ENCODE measurements at regions of chr17 and their contacts with region 1.

Region 1: DNA sequence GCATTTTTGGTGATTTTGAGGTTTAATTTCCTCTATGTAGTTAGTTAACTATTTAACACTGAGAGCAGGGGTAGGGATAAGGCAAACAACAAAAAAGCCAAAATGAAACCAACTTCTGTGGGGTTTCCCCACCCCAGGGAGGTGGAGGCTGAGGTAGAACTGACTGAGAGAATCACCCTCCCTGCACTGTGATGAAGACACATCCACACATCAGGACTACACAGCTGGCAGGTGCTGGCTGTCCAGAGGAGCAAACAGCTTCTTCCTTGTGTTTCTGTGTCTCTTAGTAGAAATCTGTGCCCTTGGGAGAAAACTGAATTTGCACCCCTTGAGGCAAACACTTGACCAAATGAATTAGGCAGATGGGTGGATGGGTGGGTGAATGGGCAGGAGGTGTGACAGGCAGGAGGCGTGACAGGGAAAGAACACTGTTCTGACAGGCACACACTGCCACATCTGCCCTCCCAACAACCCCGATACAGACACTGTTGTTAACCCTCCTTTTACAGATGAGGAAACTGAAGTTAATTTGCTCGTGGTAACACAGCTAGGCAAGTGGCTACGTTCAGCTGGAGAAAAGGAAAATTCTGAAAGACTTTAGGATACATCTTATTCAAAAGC is 62.9 kb upstream of the AMZ2 start:
- DNase-seq: peak in 7 of 9 experiments; percentile 46 to 89 (median 64)
- ATAC-seq: peak; percentile 70
- H3K4me3 ChIP-seq: peak overlapping the region; percentile 11 to 74
- H3K4me3 Mint-ChIP-seq: peak overlapping the region; percentile 68
- H3K27ac ChIP-seq: peak overlapping the region; percentile 5 to 92
- H3K27ac Mint-ChIP-seq: peak overlapping the region; percentile 86
- H3K4me1 ChIP-seq: peaks cover 56% of the 10 kb centered on the region
- H3K4me1 Mint-ChIP-seq: peaks cover 63% of the 10 kb centered on the region
- H3K27me3 ChIP-seq: no peaks in the 10 kb centered on the region
- H3K27me3 Mint-ChIP-seq: no peaks in the 10 kb centered on the region
- CTCF ChIP-seq: no peak

Region 2: DNA sequence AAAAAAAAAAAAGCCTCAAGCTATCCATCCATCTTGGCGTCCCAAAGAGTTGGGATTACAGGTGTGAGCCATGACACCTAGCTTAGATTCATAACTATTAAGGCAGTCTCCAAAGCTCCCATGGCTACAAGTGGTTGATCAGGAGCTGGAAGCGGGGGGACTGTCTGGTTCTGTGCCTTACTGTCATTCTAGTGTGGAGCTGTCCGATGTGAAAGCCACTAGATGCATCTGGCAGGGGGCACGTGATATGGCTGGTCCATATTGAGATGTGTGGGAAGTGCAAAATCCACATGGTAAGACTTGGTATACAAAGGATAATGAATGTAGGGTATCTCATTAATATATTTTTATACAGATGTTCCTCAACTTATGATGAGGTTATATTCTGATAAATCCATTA is 110.6 kb before region 1 on chr17:
- CTCF ChIA-PET with region 1: no interaction called
- POLR2A ChIA-PET with region 1: no interaction called
- intact Hi-C with region 1: no loop called
- DNase-seq: no peak
- ATAC-seq: no peak
- H3K4me3 ChIP-seq: no peak overlapping the region
- H3K4me3 Mint-ChIP-seq: no peak overlapping the region
- H3K27ac ChIP-seq: no peak overlapping the region
- H3K27ac Mint-ChIP-seq: no peak overlapping the region
- H3K4me1 ChIP-seq: no peaks in the 10 kb centered on the region
- H3K4me1 Mint-ChIP-seq: no peaks in the 10 kb centered on the region
- H3K27me3 ChIP-seq: no peaks in the 10 kb centered on the region
- H3K27me3 Mint-ChIP-seq: no peaks in the 10 kb centered on the region
- CTCF ChIP-seq: no peak

Region 3: DNA sequence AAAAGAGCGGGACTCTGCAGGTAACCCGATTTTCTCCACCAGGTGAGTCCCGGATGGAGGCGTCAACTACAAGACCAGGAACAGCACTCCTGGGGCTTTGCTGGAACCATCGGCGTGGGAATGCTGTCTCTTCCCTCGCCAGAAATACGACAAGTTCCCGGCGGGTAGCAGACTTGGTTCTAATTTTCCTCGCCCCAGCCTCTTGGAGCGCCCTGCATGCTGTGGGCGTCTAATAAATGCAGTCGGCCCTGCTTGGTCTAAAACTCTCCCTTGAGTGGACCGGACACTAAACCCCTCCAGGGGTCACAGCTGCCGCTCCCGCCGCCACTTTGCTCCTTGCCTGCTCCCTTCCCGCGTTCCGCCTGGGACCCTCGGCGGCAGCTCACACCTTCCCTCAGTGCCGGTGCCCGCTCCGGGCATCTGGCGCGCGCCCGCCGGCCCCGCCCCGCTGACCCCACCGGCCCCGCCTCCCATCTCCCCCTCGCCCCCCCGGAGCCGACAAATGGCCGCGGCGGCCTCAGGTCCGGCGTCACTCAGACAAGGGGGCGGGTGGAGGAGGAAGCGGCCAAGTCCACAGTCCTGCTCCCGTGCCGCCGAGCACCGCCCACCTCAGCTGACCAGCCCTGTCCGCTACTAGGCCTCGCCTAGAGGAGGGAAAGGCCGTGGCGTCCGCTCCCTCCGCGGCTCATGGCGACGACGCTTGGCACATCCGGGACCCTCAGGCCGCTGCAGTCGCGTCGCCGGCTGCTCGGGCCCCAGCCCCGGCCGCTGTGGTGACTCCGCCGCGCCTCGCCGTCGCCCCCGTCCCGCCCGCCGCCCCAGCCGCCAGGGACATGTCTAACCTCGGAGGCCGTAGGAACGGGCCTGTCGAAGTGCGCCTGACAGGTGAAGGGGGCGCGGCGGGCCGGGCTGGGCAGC is 83.6 kb before region 1 on chr17:
- CTCF ChIA-PET with region 1: no interaction called
- POLR2A ChIA-PET with region 1: no interaction called
- intact Hi-C with region 1: loop called in 1 of 2 experiments (anchors 5 kb)
- DNase-seq: peak; percentile 38 to 83 (median 67)
- ATAC-seq: peak; percentile 70
- H3K4me3 ChIP-seq: peak overlapping the region; percentile 75 to 83
- H3K4me3 Mint-ChIP-seq: peak overlapping the region; percentile 96
- H3K27ac ChIP-seq: peak overlapping the region; percentile 73 to 88
- H3K27ac Mint-ChIP-seq: peak overlapping the region; percentile 97
- H3K4me1 ChIP-seq: peaks cover 12% of the 10 kb centered on the region
- H3K4me1 Mint-ChIP-seq: peaks cover 42% of the 10 kb centered on the region
- H3K27me3 ChIP-seq: no peaks in the 10 kb centered on the region
- H3K27me3 Mint-ChIP-seq: no peaks in the 10 kb centered on the region
- CTCF ChIP-seq: no peak

Region 4: GRCh38 chr17:68152161-68152571 is 32.8 kb before region 1 on chr17:
- CTCF ChIA-PET with region 1: no interaction called
- POLR2A ChIA-PET with region 1: no interaction called
- intact Hi-C with region 1: no loop called
- DNase-seq: no peak
- ATAC-seq: no peak
- H3K4me3 ChIP-seq: no peak overlapping the region
- H3K4me3 Mint-ChIP-seq: no peak overlapping the region
- H3K27ac ChIP-seq: no peak overlapping the region
- H3K27ac Mint-ChIP-seq: no peak overlapping the region
- H3K4me1 ChIP-seq: no peaks in the 10 kb centered on the region
- H3K4me1 Mint-ChIP-seq: no peaks in the 10 kb centered on the region
- H3K27me3 ChIP-seq: no peaks in the 10 kb centered on the region
- H3K27me3 Mint-ChIP-seq: no peaks in the 10 kb centered on the region
- CTCF ChIP-seq: no peak

Region 5: DNA sequence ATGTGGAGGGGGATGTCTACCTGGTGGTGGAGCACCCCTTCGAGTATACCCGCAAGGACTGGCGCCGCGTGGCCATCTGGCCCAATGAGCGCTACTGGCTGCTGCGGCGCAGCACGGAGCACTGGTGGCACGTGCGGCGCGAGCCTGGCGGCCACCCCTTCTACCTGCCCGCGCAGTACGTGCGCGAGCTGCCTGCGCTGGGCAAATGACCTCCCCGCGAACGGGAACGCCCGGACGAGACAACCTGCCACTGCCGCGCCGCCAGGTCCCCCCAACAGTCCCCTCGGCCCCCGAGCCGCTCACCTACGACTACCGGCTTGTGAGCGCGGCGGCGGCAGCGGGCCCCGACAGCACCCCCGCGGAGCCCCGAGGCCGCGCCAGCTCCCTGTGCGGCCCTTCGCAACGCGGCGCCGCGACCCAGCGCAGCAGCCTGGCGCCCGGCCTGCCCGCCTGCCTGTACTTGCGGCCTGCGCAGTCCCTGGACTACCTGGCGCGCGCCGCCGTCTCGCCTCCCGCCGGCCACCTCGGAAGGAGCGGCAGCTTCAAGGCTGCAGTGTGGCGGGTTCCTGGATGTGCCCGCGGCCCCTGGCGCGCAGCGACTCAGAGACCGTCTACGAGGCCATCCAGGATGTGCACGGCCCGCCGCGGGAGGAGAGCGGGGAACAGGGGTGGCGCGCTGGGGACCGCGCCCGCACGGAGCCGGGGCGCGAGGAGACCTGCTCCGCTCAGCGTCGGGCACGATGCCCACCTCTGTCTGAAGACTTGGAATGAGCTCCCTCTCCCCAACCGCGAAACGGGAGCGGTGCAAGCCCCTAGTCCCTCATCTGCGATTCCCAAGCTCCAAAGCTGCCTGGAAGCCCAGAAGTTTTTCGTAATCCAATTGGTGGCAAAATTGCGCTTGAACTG is 14.3 kb after region 1 on chr17:
- CTCF ChIA-PET with region 1: interaction called, 226 read pairs
- POLR2A ChIA-PET with region 1: interaction called, 115 read pairs
- intact Hi-C with region 1: loop called (anchors 1 kb)
- DNase-seq: peak in 6 of 9 experiments; percentile 44 to 72 (median 60)
- ATAC-seq: peak; percentile 35
- H3K4me3 ChIP-seq: peak overlapping the region; percentile 53 to 56
- H3K4me3 Mint-ChIP-seq: peak overlapping the region; percentile 89
- H3K27ac ChIP-seq: no peak overlapping the region
- H3K27ac Mint-ChIP-seq: no peak overlapping the region
- H3K4me1 ChIP-seq: peaks cover 49% of the 10 kb centered on the region
- H3K4me1 Mint-ChIP-seq: peaks cover 32% of the 10 kb centered on the region
- H3K27me3 ChIP-seq: peaks cover 13 to 23% of the 10 kb centered on the region in 2 experiments
- H3K27me3 Mint-ChIP-seq: peaks cover 12% of the 10 kb centered on the region
- CTCF ChIP-seq: no peak

Region 6: GRCh38 chr17:68247445-68248198 is 62.7 kb after region 1 on chr17 and contains the start of gene AMZ2:
- CTCF ChIA-PET with region 1: interaction called, 7 read pairs
- POLR2A ChIA-PET with region 1: interaction called, 15 read pairs
- intact Hi-C with region 1: loop called (anchors 5 kb)
- DNase-seq: peak; percentile 94 to 99 (median 98)
- ATAC-seq: peak; percentile 91
- H3K4me3 ChIP-seq: peak within 1 kb of the TSS; percentile 70 to 94
- H3K4me3 Mint-ChIP-seq: peak within 1 kb of the TSS; percentile 96
- H3K27ac ChIP-seq: peak within 1 kb of the TSS; percentile 93 to 96
- H3K27ac Mint-ChIP-seq: peak within 1 kb of the TSS; percentile 98
- H3K4me1 ChIP-seq: peaks cover 34% of the 10 kb centered on the region
- H3K4me1 Mint-ChIP-seq: peaks cover 42% of the 10 kb centered on the region
- H3K27me3 ChIP-seq: no peaks in the 10 kb centered on the region
- H3K27me3 Mint-ChIP-seq: no peaks in the 10 kb centered on the region
- CTCF ChIP-seq: no peak
- total RNA-seq, gene AMZ2: 61.0 to 71.1 TPM

Region 7: GRCh38 chr17:68512247-68512982 is 327.5 kb after region 1 on chr17 and contains the start of gene PRKAR1A:
- CTCF ChIA-PET with region 1: no interaction called
- POLR2A ChIA-PET with region 1: no interaction called
- intact Hi-C with region 1: loop called in 1 of 2 experiments (anchors 5 kb)
- DNase-seq: peak; percentile 88 to 98 (median 94)
- ATAC-seq: peak; percentile 79
- H3K4me3 ChIP-seq: peak within 1 kb of the TSS; percentile 85 to 87
- H3K4me3 Mint-ChIP-seq: peak within 1 kb of the TSS; percentile 100
- H3K27ac ChIP-seq: peak within 1 kb of the TSS; percentile 99
- H3K27ac Mint-ChIP-seq: peak within 1 kb of the TSS; percentile 100
- H3K4me1 ChIP-seq: peaks cover 22% of the 10 kb centered on the region
- H3K4me1 Mint-ChIP-seq: peaks cover 54% of the 10 kb centered on the region
- H3K27me3 ChIP-seq: no peaks in the 10 kb centered on the region
- H3K27me3 Mint-ChIP-seq: no peaks in the 10 kb centered on the region
- CTCF ChIP-seq: no peak
- total RNA-seq, gene PRKAR1A: 61.2 to 63.5 TPM

Measured in CD8-positive, alpha-beta T cell (primary cell).